ENCODE measurements at regions of chr6 and their contacts with region 1.

Region 1: GRCh38 chr6:26568601-26569432 is 27.9 kb upstream of the ABT1 start:
- DNase-seq: peak; percentile 75 to 95 (median 90)
- ATAC-seq: peak; percentile 79 to 84 (median 80)
- H3K4me3 ChIP-seq: peak overlapping the region; percentile 22 to 68 (median 56)
- H3K27ac ChIP-seq: peak overlapping the region in 9 of 12 donors; percentile 22 to 69 (median 37)
- H3K4me1 ChIP-seq: peaks cover 0 to 22% (median 2%) of the 10 kb centered on the region in 12 donors
- H3K27me3 ChIP-seq: no peaks in the 10 kb centered on the region
- CTCF ChIP-seq: peak in 3 of 12 donors; percentile 8 to 14 (median 11)
- POLR2A ChIP-seq: no peak

Region 2: DNA sequence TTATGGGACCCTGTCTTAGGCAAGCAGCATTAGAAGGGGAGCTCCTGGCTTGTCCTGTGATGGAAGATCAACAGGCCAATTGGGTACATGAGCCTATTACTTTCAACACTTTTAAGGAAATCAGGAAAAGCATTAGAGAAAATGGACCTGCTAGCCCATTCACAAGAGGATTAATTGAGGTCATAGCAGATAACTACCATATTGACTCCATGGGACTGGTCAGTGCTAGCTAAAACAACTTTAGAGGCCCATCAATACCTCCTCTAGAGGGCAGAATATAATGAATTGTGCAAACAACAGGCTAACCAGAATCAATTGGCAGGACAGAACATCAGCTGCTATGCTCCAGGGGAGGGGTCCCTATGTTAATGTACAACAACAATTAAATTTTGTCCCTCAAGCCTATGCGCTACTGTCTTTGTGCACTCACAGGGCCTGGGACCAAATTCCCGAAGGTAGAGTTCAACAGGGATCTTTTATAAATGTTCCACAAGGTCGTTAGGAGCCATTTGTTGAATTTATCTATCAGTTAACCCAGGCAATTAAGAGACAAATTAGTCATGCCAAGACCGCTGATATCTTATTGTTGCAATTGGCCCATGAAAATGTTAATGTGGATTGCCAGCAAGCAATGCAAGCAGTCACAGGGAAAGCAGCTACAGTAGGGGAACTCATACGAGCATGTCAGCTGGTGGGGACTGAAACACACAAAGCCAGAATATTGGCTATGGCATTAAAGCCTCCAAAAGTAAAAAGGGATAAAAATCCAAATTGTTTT is 310.4 kb before region 1 on chr6:
- intact Hi-C with region 1: no loop called
- DNase-seq: no peak
- ATAC-seq: no peak
- H3K4me3 ChIP-seq: no peak overlapping the region
- H3K27ac ChIP-seq: no peak overlapping the region
- H3K4me1 ChIP-seq: peaks cover 0 to 19% (median 0%) of the 10 kb centered on the region in 12 donors
- H3K27me3 ChIP-seq: peaks cover 0 to 61% (median 4%) of the 10 kb centered on the region in 9 donors
- CTCF ChIP-seq: no peak
- POLR2A ChIP-seq: no peak

Region 3: DNA sequence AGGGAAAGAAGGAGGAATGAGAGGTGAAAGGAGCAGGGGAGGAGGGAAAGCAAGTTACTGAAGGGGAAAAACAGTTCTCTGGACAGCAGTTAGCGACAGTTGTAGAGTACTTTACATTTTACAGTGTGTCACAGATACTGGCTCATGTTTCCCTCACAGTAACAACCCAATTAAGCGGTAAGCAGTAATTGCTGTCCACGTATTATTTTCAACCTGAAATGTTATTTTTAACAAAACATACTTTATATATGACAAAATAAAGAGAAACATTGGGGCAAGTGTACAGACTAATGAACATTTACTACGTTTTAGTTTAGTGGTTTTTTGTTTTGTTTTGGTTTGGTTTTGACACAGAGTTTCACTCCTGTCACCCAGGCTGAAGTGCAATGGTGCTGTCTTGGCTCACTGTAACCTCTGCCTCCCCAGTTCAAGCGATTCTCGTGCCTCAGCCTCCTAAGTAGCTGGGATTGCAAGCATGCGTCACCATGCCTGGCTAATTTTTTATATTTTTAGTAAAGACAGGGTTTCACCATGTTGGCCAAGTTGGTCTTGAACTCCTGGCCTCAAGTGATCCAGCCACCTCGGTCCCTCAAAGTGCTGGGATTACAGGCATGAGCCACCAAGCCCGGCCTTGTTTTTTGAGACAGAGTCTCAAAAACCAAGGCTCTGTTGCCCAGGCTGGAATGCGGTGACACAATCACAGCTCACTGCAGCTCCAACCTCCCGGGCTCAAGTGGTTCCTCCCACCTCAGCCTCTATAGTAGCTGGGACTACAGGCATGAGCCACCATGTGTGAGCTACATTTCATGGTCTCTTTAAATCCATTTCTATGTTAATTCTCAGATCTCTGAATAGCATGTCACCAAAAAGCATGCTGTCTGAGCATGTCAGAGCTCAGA is 226.5 kb before region 1 on chr6:
- intact Hi-C with region 1: loop called in 6 of 10 experiments (anchors 1 to 10 kb)
- DNase-seq: no peak
- ATAC-seq: no peak
- H3K4me3 ChIP-seq: peak overlapping the region in 1 of 12 donors; percentile 33
- H3K27ac ChIP-seq: no peak overlapping the region
- H3K4me1 ChIP-seq: peaks cover 0 to 5% (median 0%) of the 10 kb centered on the region in 12 donors
- H3K27me3 ChIP-seq: peaks cover 0 to 39% (median 15%) of the 10 kb centered on the region in 9 donors
- CTCF ChIP-seq: no peak
- POLR2A ChIP-seq: no peak

Region 4: GRCh38 chr6:26457264-26457805 is 111.5 kb before region 1 on chr6:
- intact Hi-C with region 1: no loop called
- DNase-seq: peak in 3 of 5 donors; percentile 25 to 47 (median 37)
- ATAC-seq: peak; percentile 59 to 65 (median 60)
- H3K4me3 ChIP-seq: peak overlapping the region; percentile 59 to 91 (median 88)
- H3K27ac ChIP-seq: peak overlapping the region; percentile 61 to 98 (median 94)
- H3K4me1 ChIP-seq: peaks cover 0 to 69% (median 40%) of the 10 kb centered on the region in 12 donors
- H3K27me3 ChIP-seq: no peaks in the 10 kb centered on the region
- CTCF ChIP-seq: no peak
- POLR2A ChIP-seq: no peak

Region 5: DNA sequence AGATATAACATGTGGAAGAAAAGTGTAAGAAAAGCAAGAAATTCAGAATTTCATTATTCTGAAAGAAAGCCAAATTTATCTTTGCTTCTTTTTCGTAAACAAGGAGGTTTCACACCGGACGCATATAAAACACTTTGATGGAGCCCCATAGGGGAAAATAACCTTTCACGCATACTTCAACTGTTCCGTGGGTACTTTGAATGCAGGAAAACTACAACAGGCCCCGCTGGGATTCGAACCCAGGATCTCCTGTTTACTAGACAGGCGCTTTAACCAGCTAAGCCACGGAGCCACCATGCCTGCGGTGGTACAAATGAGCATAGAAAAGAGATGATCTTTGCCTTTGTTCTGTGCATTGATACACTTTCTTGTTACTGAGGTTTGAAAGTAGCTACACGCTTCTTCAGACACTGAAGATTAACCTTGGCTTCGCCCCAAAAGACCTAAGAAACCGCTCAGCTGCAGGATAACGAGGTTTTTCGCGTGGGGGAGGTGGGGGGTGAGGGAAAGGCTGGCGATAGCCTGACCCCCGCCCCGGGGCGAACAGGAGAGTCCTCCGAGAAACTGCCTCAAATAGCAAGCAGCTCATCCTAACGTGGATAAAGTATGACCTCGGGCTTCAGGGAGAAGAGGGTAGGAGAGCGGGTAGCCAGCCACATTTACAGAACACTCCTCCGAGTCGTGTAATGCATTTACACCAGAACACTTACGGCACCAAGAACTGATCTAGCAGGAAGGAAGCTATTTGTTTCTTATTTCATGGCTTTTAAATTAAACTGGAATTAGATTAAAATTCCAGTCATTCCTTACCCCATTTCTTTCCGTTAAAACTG is 35.9 kb before region 1 on chr6:
- intact Hi-C with region 1: loop called in 5 of 10 experiments (anchors 2 to 5 kb)
- DNase-seq: peak; percentile 81 to 89 (median 87)
- ATAC-seq: peak; percentile 40 to 80 (median 64)
- H3K4me3 ChIP-seq: peak overlapping the region; percentile 52 to 79 (median 68)
- H3K27ac ChIP-seq: peak overlapping the region in 11 of 12 donors; percentile 58 to 88 (median 78)
- H3K4me1 ChIP-seq: peaks cover 0 to 37% (median 15%) of the 10 kb centered on the region in 12 donors
- H3K27me3 ChIP-seq: no peaks in the 10 kb centered on the region
- CTCF ChIP-seq: no peak
- POLR2A ChIP-seq: no peak

Region 6: GRCh38 chr6:26553635-26554446 is 15.0 kb before region 1 on chr6:
- intact Hi-C with region 1: loop called in 2 of 10 experiments (anchors 1 to 2 kb)
- DNase-seq: peak; percentile 66 to 85 (median 72)
- ATAC-seq: peak; percentile 85 to 93 (median 88)
- H3K4me3 ChIP-seq: peak overlapping the region; percentile 26 to 66 (median 60)
- H3K27ac ChIP-seq: peak overlapping the region; percentile 18 to 90 (median 84)
- H3K4me1 ChIP-seq: peaks cover 0 to 33% (median 10%) of the 10 kb centered on the region in 12 donors
- H3K27me3 ChIP-seq: no peaks in the 10 kb centered on the region
- CTCF ChIP-seq: no peak
- POLR2A ChIP-seq: no peak

Region 7: DNA sequence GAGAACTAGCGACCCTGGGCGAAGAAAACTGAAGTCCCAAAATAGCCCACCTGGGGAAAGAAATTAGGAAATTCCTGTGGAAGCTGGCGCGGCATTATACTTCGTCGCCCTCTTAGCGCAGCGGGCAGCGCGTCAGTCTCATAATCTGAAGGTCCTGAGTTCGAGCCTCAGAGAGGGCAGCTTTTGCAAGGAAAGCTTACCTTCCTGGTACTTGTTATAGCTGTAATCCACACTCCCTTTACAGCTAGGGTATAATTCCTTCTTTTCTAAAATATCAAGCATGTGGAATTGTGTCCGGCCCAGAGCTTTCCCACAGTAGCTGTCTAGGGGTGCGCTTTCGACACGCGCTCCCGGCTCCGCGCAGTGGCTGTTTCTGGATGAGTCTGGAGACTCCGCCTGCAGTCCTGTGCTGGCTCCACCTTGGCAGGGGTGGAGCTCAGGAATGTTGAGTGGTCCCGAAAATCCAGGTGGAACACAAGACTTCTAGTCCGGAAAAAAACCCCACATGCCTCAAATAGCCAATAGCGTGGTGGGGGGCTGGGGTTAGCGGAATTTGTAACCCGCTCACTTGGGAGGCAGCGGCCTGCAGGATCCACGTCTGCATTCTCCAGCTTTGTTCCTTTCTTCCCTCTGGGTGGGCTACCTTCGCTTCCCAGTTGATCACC is 174.5 kb after region 1 on chr6:
- intact Hi-C with region 1: no loop called
- DNase-seq: no peak
- ATAC-seq: no peak
- H3K4me3 ChIP-seq: no peak overlapping the region
- H3K27ac ChIP-seq: no peak overlapping the region
- H3K4me1 ChIP-seq: no peaks in the 10 kb centered on the region
- H3K27me3 ChIP-seq: peaks cover 5 to 54% (median 33%) of the 10 kb centered on the region in 9 donors
- CTCF ChIP-seq: no peak
- POLR2A ChIP-seq: no peak

Region 8: GRCh38 chr6:27753668-27754407 is 1185.0 kb after region 1 on chr6:
- intact Hi-C with region 1: loop called in 1 of 10 experiments (anchors 10 kb)
- DNase-seq: peak; percentile 37 to 81 (median 56)
- ATAC-seq: peak in 2 of 4 donors; percentile 67 to 77
- H3K4me3 ChIP-seq: peak overlapping the region in 10 of 12 donors; percentile 61 to 88 (median 69)
- H3K27ac ChIP-seq: no peak overlapping the region
- H3K4me1 ChIP-seq: peaks cover 0 to 23% (median 7%) of the 10 kb centered on the region in 12 donors
- H3K27me3 ChIP-seq: peaks cover 5 to 30% (median 20%) of the 10 kb centered on the region in 9 donors
- CTCF ChIP-seq: peak in 1 of 12 donors; percentile 7
- POLR2A ChIP-seq: peak in 1 of 2 donors; percentile 7